Activated CD4-positive, alpha-beta memory T cell treated with anti-CD3 and anti-CD28 coated beads, Interleukin-2, amount 10 ng/mL, durations not matched to agents 7 days and 5 days (primary cell): ENCODE measurements at regions of chr7 and their contacts with region 1.

Region 1: DNA sequence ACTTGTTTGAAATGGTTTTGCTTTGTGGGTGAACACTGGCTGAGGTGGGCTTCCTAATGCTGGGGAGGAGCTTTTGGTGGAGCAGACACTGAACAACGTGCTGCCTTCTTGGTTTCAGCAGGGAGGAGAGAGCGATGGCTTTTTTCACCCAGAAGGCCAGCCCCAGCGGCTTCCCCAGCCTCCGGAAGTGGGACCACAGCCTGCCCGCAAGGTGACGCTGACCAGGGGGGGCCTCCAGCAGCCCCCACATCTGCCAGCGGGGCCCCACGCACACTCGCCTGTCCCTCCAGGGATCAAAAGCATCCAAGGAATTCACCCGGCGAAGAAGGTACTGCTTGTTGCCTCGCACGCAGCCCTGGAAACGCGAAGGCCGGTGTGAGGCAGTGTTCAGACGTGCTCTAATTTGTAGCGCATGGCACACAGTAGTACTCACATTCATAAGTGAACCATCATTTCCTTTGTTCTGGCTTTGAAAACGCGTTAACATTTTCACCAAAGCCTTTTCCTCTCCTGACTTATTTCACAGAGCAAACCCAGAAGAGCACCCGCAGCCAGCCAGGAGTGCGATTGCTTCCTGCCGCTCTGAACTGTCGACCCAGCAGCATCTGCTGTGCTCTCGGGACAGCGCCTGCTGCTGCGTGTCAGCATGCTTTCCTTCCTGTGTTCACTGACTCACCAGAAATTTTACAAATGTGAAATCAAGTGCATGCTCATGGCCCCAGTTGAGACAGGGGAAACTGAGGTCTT is 48.4 kb downstream of the SHH start:
- DNase-seq: peak; percentile 77
- H3K4me3 Mint-ChIP-seq: peak overlapping the region; percentile 73
- H3K27ac Mint-ChIP-seq: peak overlapping the region; percentile 99
- H3K4me1 Mint-ChIP-seq: peaks cover 54% of the 10 kb centered on the region
- H3K27me3 Mint-ChIP-seq: no peaks in the 10 kb centered on the region

Region 2: GRCh38 chr7:155560982-155561686 is 202.7 kb before region 1 on chr7:
- CTCF ChIA-PET with region 1: no interaction called
- POLR2A ChIA-PET with region 1: no interaction called
- DNase-seq: no peak
- H3K4me3 Mint-ChIP-seq: no peak overlapping the region
- H3K27ac Mint-ChIP-seq: no peak overlapping the region
- H3K4me1 Mint-ChIP-seq: no peaks in the 10 kb centered on the region
- H3K27me3 Mint-ChIP-seq: peaks cover 11% of the 10 kb centered on the region

Region 3: GRCh38 chr7:155644178-155644970 is 119.5 kb before region 1 on chr7 and contains the start of gene RBM33:
- CTCF ChIA-PET with region 1: interaction called, 3 read pairs
- POLR2A ChIA-PET with region 1: interaction called, 16 read pairs
- DNase-seq: peak; percentile 80
- H3K4me3 Mint-ChIP-seq: peak within 1 kb of the TSS; percentile 98
- H3K27ac Mint-ChIP-seq: peak within 1 kb of the TSS; percentile 97
- H3K4me1 Mint-ChIP-seq: peaks cover 49% of the 10 kb centered on the region
- H3K27me3 Mint-ChIP-seq: no peaks in the 10 kb centered on the region
- total RNA-seq, gene RBM33: 75.8 to 76.5 TPM

Region 4: GRCh38 chr7:155918714-155919399 is 155.0 kb after region 1 on chr7:
- CTCF ChIA-PET with region 1: no interaction called
- POLR2A ChIA-PET with region 1: no interaction called
- DNase-seq: no peak
- H3K4me3 Mint-ChIP-seq: no peak overlapping the region
- H3K27ac Mint-ChIP-seq: no peak overlapping the region
- H3K4me1 Mint-ChIP-seq: no peaks in the 10 kb centered on the region
- H3K27me3 Mint-ChIP-seq: no peaks in the 10 kb centered on the region